Spleen (tissue), 13 donors: ENCODE measurements at regions of chr9 and their contacts with region 1.

Region 1: DNA sequence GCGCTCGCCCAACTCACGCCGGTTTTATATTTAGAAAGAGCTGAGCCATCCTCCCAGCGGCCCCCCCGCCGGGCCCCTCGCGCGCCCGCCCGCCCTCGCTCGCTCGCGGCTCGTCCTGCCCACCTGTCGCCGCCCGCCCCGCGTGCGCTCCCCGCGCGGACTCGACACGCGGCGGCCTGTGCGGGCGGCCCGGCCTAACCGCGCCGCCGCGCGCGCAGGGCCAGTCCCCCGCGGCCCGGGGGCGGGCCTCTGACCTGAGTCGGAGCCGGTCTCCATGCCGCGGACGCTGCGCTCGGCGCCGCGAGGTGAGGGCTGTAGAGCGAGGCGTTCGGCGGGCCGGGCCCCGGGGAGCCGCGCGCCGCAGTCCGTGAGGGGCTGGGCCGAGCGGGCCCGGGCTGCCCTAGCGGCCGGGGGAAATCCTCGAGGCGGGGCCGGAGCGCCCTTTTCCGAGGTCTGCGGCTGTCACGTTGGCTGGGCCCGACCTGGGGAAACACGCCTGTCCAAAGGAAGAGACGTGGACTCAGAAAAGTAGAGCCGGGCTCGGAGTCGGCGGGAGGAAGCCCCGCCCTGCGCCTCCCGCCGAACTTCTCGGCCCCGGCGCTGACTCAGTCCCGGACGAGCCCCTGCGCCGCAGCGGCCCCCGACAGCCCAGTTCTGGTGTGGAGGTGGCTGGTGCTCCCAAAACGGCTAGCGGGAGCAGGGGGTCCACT is at the start of gene ECPAS:
- DNase-seq: peak; percentile 94
- H3K4me3 ChIP-seq: peak within 1 kb of the TSS; percentile 67 to 95 (median 90)
- H3K27ac ChIP-seq: peak within 1 kb of the TSS; percentile 95 to 99 (median 96)
- H3K4me1 ChIP-seq: peaks cover 10 to 42% (median 23%) of the 10 kb centered on the region in 6 donors
- H3K27me3 ChIP-seq: no peaks in the 10 kb centered on the region
- CTCF ChIP-seq: peak in 1 of 11 experiments; percentile 9
- POLR2A ChIP-seq: no peak
- total RNA-seq, gene ECPAS: 53.2 to 71.2 (median 59.1) TPM

Region 2: GRCh38 chr9:111533099-111533790 is 49.2 kb after region 1 on chr9:
- intact Hi-C with region 1: no loop called
- DNase-seq: no peak
- H3K4me3 ChIP-seq: no peak overlapping the region
- H3K27ac ChIP-seq: no peak overlapping the region
- H3K4me1 ChIP-seq: no peaks in the 10 kb centered on the region
- H3K27me3 ChIP-seq: no peaks in the 10 kb centered on the region
- CTCF ChIP-seq: no peak
- POLR2A ChIP-seq: no peak

Region 3: DNA sequence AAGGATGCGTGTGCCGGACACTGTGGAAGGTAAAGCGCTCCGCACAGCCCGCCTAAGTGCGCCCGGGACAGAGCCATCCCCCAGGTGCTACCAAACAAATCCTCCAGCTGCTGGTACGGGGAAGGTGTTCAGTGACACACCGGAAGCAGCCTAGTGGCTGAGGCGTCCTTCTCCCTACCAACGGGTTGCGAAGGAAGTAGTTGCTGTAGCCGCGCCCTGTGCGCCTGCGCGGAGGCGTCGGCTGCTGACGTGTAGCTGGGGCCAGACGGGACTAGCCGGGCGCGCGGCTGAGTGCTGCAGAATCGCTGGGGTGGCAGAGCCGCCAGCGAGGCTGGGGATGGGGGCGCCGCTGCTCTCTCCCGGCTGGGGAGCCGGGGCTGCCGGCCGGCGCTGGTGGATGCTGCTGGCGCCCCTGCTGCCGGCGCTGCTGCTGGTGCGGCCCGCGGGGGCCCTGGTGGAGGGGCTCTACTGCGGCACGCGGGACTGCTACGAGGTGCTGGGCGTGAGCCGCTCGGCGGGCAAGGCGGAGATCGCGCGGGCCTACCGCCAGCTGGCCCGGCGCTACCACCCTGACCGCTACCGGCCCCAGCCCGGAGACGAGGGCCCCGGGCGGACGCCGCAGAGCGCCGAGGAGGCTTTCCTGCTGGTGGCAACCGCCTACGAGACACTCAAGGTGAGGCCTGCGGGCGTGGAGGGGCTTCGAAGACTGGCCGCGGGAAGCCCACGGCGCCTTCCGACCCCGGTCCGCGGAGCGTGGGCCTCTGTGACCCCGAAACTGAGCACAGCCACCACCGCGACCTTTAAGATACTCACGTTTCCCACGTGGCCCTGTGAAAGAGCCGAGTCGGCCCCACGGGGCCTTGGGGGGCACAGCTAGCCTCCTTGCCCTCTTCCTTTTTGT is 147.3 kb after region 1 on chr9 and contains the start of gene DNAJC25:
- intact Hi-C with region 1: loop called (anchors 10 kb)
- DNase-seq: peak; percentile 99
- H3K4me3 ChIP-seq: peak within 1 kb of the TSS; percentile 69 to 97 (median 90)
- H3K27ac ChIP-seq: peak within 1 kb of the TSS; percentile 64 to 97 (median 93)
- H3K4me1 ChIP-seq: peaks cover 9 to 57% (median 44%) of the 10 kb centered on the region in 6 donors
- H3K27me3 ChIP-seq: no peaks in the 10 kb centered on the region
- CTCF ChIP-seq: peak in 6 of 11 experiments; percentile 2 to 52 (median 26)
- POLR2A ChIP-seq: peak; percentile 96 to 99 (median 97)
- total RNA-seq, gene DNAJC25: 3.3 to 6.0 (median 4.1) TPM

Region 4: DNA sequence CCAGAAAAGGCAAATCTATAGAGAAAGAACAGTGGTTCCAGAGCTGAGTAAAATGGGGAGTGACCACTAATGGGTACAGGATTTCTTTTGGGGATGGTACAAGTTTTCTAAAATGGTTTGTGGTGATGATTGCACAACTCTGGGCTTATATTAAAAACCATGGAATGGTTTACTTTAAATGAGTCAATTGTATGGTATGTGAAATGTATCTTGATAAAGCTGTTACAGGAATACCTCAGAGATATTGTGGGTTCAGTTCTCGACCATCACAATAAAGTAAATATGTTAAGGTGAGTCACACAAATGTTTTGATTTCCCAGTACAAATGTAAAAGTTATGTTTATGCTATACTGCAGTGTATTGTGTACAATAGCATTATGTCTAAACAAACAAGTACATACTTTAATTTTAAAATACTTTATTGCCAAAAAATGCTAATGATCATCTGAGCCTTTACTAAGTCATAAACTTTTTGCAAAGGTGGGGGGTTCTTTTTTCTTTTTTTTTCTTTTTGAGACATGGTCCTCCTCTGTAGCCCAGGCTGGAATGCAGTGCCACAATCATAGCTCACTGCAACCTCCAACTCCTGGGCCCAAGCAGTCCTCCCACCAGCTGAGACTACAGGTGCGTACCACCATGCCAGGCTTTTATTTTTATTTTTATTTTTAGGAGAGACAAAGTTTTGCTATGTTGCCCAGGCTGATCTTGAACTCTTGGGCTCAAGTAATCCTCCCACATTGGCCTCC is 244.8 kb after region 1 on chr9:
- intact Hi-C with region 1: no loop called
- DNase-seq: no peak
- H3K4me3 ChIP-seq: no peak overlapping the region
- H3K27ac ChIP-seq: no peak overlapping the region
- H3K4me1 ChIP-seq: no peaks in the 10 kb centered on the region
- H3K27me3 ChIP-seq: no peaks in the 10 kb centered on the region
- CTCF ChIP-seq: no peak
- POLR2A ChIP-seq: no peak